ENCODE measurements at regions of chr11 and their contacts with region 1.

Region 1: DNA sequence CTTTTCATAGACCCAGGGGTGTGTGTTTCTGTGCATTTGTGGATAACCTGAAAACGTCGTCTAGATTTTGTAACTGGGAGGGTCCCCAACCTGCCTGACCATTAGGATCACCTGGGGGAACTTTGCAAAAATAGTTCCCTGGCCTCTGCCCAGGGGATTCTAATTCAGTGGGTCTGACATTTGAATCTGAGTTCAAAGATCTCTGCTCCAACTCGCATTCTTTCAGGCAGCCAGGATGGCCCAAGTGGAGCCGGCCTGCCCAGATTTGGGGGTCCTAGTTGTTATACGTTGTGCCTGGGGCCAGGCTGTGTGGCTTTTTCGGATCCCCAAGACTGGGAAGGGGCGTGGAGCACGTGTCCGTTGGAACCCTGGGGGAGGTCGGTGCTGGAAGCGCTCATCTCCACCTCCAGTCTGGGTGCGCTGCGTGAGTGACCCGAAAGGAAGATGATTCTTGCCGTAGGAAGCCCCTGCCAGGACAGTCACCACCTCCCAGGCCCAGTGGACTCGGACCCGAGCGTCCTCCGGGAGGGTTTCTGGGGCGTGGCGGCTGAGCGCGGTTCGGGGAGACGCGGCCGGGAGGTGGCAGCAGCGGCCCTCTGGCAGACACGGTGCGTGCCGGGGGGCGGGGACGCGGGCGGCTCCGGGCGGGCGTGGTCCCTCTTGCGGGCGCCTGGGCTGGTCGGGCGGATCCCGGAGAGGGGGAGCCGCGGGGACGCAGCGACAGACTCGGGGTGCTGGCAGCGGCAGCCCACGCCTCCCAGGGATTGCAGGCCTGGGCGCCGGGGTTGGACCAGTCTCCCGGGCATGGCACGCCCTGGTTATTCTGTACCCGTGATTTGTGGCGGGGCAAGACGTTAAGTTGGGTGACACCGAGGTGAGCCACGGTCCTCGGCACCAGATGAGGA is 29.2 kb upstream of the PLET1 start:
- DNase-seq: peak; percentile 83
- ATAC-seq: peak; percentile 98
- H3K4me3 Mint-ChIP-seq: peak overlapping the region; percentile 78
- H3K27ac Mint-ChIP-seq: peak overlapping the region; percentile 0
- H3K4me1 Mint-ChIP-seq: peaks cover 13% of the 10 kb centered on the region
- H3K27me3 Mint-ChIP-seq: no peaks in the 10 kb centered on the region
- CTCF ChIP-seq: peak; percentile 25

Region 2: DNA sequence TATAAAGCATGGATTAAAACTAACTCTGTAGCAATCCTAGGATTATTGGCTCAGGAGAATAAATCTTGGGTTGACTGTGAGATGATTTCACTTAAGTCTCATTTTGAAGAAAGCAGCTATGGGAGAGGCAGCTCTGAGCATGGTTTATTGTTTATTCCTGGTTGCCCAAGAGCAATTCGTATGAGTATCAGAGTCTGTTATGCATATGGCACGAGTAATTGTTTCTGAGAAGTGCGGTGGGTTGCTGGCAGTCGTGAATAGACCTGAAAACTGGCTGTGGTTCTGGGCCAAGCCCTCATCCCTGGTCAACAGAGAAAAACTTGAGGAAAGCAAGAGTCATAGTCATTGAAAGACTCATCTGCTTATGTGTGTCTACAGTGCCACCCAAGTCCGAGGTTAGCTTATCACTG is 325.9 kb before region 1 on chr11:
- CTCF ChIA-PET with region 1: no interaction called
- POLR2A ChIA-PET with region 1: no interaction called
- intact Hi-C with region 1: no loop called
- DNase-seq: no peak
- ATAC-seq: no peak
- H3K4me3 Mint-ChIP-seq: no peak overlapping the region
- H3K27ac Mint-ChIP-seq: no peak overlapping the region
- H3K4me1 Mint-ChIP-seq: no peaks in the 10 kb centered on the region
- H3K27me3 Mint-ChIP-seq: no peaks in the 10 kb centered on the region
- CTCF ChIP-seq: no peak

Region 3: GRCh38 chr11:112453601-112454577 is 164.0 kb after region 1 on chr11:
- CTCF ChIA-PET with region 1: no interaction called
- POLR2A ChIA-PET with region 1: no interaction called
- intact Hi-C with region 1: loop called (anchors 5 kb)
- DNase-seq: no peak
- ATAC-seq: no peak
- H3K4me3 Mint-ChIP-seq: no peak overlapping the region
- H3K27ac Mint-ChIP-seq: no peak overlapping the region
- H3K4me1 Mint-ChIP-seq: no peaks in the 10 kb centered on the region
- H3K27me3 Mint-ChIP-seq: no peaks in the 10 kb centered on the region
- CTCF ChIP-seq: no peak

Region 4: GRCh38 chr11:112477581-112478317 is 187.9 kb after region 1 on chr11:
- CTCF ChIA-PET with region 1: no interaction called
- POLR2A ChIA-PET with region 1: no interaction called
- intact Hi-C with region 1: no loop called
- DNase-seq: no peak
- ATAC-seq: no peak
- H3K4me3 Mint-ChIP-seq: no peak overlapping the region
- H3K27ac Mint-ChIP-seq: no peak overlapping the region
- H3K4me1 Mint-ChIP-seq: no peaks in the 10 kb centered on the region
- H3K27me3 Mint-ChIP-seq: no peaks in the 10 kb centered on the region
- CTCF ChIP-seq: no peak

Region 5: GRCh38 chr11:112555491-112556364 is 265.9 kb after region 1 on chr11:
- CTCF ChIA-PET with region 1: interaction called, 3 read pairs
- POLR2A ChIA-PET with region 1: no interaction called
- intact Hi-C with region 1: loop called (anchors 1 kb)
- DNase-seq: peak; percentile 21
- ATAC-seq: peak; percentile 37
- H3K4me3 Mint-ChIP-seq: no peak overlapping the region
- H3K27ac Mint-ChIP-seq: no peak overlapping the region
- H3K4me1 Mint-ChIP-seq: no peaks in the 10 kb centered on the region
- H3K27me3 Mint-ChIP-seq: peaks cover 9% of the 10 kb centered on the region
- CTCF ChIP-seq: no peak

Region 6: GRCh38 chr11:112588252-112588694 is 298.4 kb after region 1 on chr11:
- CTCF ChIA-PET with region 1: interaction called, 3 read pairs
- POLR2A ChIA-PET with region 1: no interaction called
- intact Hi-C with region 1: loop called (anchors 10 kb)
- DNase-seq: no peak
- ATAC-seq: no peak
- H3K4me3 Mint-ChIP-seq: no peak overlapping the region
- H3K27ac Mint-ChIP-seq: no peak overlapping the region
- H3K4me1 Mint-ChIP-seq: no peaks in the 10 kb centered on the region
- H3K27me3 Mint-ChIP-seq: peaks cover 2% of the 10 kb centered on the region
- CTCF ChIP-seq: peak; percentile 35

Region 7: GRCh38 chr11:112795142-112795815 is 505.4 kb after region 1 on chr11:
- CTCF ChIA-PET with region 1: interaction called, 3 read pairs
- POLR2A ChIA-PET with region 1: no interaction called
- intact Hi-C with region 1: loop called (anchors 2 kb)
- DNase-seq: no peak
- ATAC-seq: no peak
- H3K4me3 Mint-ChIP-seq: no peak overlapping the region
- H3K27ac Mint-ChIP-seq: no peak overlapping the region
- H3K4me1 Mint-ChIP-seq: no peaks in the 10 kb centered on the region
- H3K27me3 Mint-ChIP-seq: peaks cover 2% of the 10 kb centered on the region
- CTCF ChIP-seq: no peak

Region 8: DNA sequence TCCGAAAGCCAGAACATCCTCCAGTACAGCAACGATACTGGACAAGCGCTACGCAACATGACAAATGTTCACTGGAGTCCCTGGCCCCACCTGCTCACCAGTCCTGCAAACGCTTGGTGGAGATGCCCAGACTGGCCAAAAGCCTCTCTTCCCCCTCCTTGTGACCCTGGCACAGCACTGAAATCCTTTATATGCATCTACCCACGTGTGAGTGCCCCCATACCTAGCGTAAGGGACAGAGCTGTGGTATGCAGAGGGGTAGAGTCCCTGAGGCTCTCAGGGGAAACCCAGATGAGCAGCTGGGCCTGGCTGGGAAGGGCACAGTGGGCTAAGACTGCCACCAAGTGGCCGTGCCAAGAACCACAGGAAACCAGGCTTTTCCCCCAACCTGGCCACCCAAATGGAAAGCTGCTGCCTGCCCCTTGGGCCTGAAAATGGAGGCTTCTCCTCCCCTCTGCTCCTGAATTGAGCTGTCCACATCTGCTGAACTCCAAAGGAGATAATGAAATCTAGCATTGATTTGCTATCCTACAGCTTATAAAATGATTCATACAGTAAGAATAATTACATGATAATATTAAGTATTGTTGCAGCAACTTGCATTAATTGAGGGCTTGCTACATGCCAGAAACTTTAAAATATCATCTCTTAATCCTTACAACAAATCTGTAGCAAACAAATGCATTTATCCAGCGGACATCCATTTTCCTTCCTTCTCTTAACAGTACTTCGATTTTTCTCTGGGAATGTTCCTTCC is 999.8 kb after region 1 on chr11:
- CTCF ChIA-PET with region 1: interaction called, 16 read pairs
- POLR2A ChIA-PET with region 1: no interaction called
- intact Hi-C with region 1: loop called (anchors 1 kb)
- DNase-seq: peak; percentile 66
- ATAC-seq: peak; percentile 100
- H3K4me3 Mint-ChIP-seq: no peak overlapping the region
- H3K27ac Mint-ChIP-seq: no peak overlapping the region
- H3K4me1 Mint-ChIP-seq: peaks cover 2% of the 10 kb centered on the region
- H3K27me3 Mint-ChIP-seq: peaks cover 4% of the 10 kb centered on the region
- CTCF ChIP-seq: peak; percentile 83